ENCODE measurements at regions of chr3 and their contacts with region 1.

Region 1: DNA sequence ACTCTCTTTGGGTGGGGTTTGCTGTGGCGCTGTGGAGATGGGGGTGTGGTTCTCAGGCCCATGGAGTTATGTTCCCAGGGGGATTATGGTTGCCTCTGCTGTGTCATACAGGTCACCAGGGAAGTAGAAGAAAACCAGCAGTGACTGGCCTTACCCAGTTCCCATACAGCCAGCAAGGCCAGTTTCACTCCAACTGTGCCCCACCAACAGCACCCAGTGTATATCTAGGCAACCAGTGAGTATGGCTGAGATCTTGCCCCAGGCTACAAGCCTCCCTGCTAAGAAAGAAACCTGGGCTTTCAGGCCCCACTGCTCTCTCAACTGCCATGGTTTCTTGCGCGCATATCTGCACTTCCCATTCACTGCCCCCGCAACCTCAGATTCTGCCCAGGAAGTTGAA is 31.4 kb upstream of the RARB start:
- DNase-seq: no peak
- H3K4me3 ChIP-seq: no peak overlapping the region
- H3K27ac ChIP-seq: no peak overlapping the region
- H3K4me1 ChIP-seq: no peaks in the 10 kb centered on the region
- H3K27me3 ChIP-seq: no peaks in the 10 kb centered on the region
- CTCF ChIP-seq: no peak
- POLR2A ChIP-seq: no peak

Region 2: DNA sequence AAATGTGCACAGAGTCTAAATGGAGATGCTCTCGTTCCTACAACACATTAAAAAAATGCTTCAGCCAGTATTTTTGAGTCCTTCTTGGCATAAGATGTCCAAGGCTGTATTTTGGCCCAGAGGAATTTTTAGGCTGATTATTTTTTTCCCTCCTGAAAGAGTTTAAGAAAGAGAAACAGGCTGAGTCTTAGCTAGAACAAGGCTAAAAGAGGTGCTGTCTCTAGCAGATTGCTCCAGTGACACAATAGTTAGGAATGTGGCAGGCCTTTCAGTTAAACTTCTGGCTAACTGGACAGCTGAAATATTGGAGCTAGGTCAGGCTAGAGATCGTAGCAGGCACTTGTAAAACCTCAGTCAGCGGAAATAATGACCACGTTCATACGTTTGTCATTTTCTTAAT is 240.1 kb before region 1 on chr3:
- intact Hi-C with region 1: no loop called
- DNase-seq: no peak
- H3K4me3 ChIP-seq: no peak overlapping the region
- H3K27ac ChIP-seq: peak overlapping the region in 1 of 2 donors; percentile 1
- H3K4me1 ChIP-seq: no peaks in the 10 kb centered on the region
- H3K27me3 ChIP-seq: no peaks in the 10 kb centered on the region
- CTCF ChIP-seq: no peak
- POLR2A ChIP-seq: no peak

Region 3: DNA sequence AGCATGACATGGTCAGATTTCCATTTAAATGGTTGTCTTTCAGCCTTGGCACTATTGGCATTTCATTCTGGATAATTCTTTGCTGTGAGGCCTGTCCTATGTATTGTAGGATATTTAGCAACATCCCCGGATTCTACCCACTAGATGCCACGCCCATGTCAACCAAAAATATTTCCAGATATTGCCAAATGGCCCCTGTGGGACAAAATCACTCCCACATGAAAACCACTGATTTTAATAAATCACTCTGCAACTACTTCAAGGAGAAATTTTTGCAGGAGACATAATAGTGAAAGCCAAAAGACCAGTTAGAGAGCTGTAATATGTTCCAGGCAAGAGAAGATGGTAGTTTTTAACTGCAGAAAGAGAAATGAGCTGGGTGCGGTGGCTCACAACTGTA is 24.5 kb before region 1 on chr3:
- intact Hi-C with region 1: no loop called
- DNase-seq: peak in 1 of 2 donors; percentile 35
- H3K4me3 ChIP-seq: no peak overlapping the region
- H3K27ac ChIP-seq: peak overlapping the region in 1 of 2 donors; percentile 30
- H3K4me1 ChIP-seq: no peaks in the 10 kb centered on the region
- H3K27me3 ChIP-seq: no peaks in the 10 kb centered on the region
- CTCF ChIP-seq: no peak
- POLR2A ChIP-seq: no peak

Region 4: GRCh38 chr3:25423780-25424588 is 27.3 kb after region 1 on chr3:
- intact Hi-C with region 1: no loop called
- DNase-seq: no peak
- H3K4me3 ChIP-seq: no peak overlapping the region
- H3K27ac ChIP-seq: no peak overlapping the region
- H3K4me1 ChIP-seq: no peaks in the 10 kb centered on the region
- H3K27me3 ChIP-seq: no peaks in the 10 kb centered on the region
- CTCF ChIP-seq: no peak
- POLR2A ChIP-seq: no peak

Region 5: DNA sequence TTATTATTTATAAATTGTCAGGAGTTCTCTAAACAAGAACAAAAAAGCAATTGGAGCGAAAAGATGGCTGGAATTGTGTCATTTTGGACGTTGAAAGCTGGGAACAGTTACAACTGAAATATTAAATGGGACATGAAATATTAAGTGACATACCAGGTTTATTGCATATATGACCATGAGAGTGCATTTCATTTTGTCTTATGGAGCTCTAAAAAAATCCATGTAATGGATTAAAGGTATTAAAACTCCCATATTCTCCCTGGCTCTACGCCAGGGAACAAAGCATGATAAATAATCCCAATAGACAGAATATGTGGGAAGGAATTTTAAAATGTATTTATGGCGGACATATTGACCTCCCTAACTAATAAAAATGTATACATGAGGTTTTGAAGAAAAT is 49.0 kb after region 1 on chr3:
- intact Hi-C with region 1: loop called (anchors 2 kb)
- DNase-seq: no peak
- H3K4me3 ChIP-seq: no peak overlapping the region
- H3K27ac ChIP-seq: no peak overlapping the region
- H3K4me1 ChIP-seq: peaks cover 0 to 9% of the 10 kb centered on the region in 2 donors
- H3K27me3 ChIP-seq: no peaks in the 10 kb centered on the region
- CTCF ChIP-seq: no peak
- POLR2A ChIP-seq: no peak